Activated naive CD4-positive, alpha-beta T cell treated with anti-CD3 and anti-CD28 coated beads for 36 hours (primary cell): ENCODE measurements at regions of chr2 and their contacts with region 1.

Region 1: GRCh38 chr2:200373973-200374416 is 67.5 kb downstream of the SPATS2L start:
- DNase-seq: peak; percentile 66
- H3K4me3 Mint-ChIP-seq: peak overlapping the region; percentile 73
- H3K27ac Mint-ChIP-seq: peak overlapping the region; percentile 70
- H3K4me1 Mint-ChIP-seq: peaks cover 40% of the 10 kb centered on the region
- H3K27me3 Mint-ChIP-seq: no peaks in the 10 kb centered on the region

Region 2: GRCh38 chr2:200225951-200226350 is 148.0 kb before region 1 on chr2:
- CTCF ChIA-PET with region 1: no interaction called
- intact Hi-C with region 1: no loop called
- DNase-seq: no peak
- H3K4me3 Mint-ChIP-seq: no peak overlapping the region
- H3K27ac Mint-ChIP-seq: no peak overlapping the region
- H3K4me1 Mint-ChIP-seq: no peaks in the 10 kb centered on the region
- H3K27me3 Mint-ChIP-seq: peaks cover 8% of the 10 kb centered on the region

Region 3: DNA sequence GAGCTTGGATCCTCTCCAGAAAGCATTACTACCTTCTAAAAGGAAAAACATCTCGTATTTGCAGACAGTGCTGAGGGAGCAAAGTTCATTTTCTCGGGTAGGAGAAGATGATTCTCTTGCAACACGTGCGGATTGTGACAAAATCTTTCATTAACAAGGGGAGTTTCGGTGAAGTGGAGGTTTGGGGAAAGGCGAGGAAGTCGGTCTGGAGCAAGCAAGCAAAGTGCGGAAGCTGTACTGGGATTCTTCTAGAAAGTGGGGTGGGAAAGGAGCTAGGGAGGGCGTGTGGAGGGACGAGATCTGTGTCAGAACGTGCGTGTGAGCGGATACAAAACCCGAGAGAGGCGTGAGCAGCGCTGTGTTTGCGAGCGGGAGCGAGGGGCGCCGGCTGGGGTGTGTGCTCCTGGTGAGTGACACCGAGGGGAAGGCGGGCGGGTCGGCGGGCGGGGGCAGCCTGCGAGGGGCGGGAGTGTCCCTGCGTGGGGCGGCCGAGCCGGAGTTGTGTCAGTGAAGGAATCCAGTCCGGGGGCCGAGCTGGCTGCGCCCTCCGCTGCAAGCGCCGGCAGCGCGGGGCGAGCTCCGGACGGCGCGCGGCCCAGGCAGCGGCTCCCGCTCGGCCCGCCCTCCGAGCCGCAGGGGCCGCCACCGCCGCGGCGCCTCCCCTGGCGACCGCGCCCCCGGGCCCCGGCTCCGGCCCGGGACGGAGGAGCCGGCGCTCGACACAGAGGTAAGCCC is 67.6 kb before region 1 on chr2 and contains the start of gene SPATS2L:
- CTCF ChIA-PET with region 1: interaction called, 3 read pairs
- intact Hi-C with region 1: loop called (anchors 2 kb)
- DNase-seq: peak; percentile 64
- H3K4me3 Mint-ChIP-seq: peak within 1 kb of the TSS; percentile 85
- H3K27ac Mint-ChIP-seq: peak within 1 kb of the TSS; percentile 4
- H3K4me1 Mint-ChIP-seq: peaks cover 13% of the 10 kb centered on the region
- H3K27me3 Mint-ChIP-seq: peaks cover 15% of the 10 kb centered on the region
- total RNA-seq, gene SPATS2L: 8.9 to 10.9 TPM

Region 4: DNA sequence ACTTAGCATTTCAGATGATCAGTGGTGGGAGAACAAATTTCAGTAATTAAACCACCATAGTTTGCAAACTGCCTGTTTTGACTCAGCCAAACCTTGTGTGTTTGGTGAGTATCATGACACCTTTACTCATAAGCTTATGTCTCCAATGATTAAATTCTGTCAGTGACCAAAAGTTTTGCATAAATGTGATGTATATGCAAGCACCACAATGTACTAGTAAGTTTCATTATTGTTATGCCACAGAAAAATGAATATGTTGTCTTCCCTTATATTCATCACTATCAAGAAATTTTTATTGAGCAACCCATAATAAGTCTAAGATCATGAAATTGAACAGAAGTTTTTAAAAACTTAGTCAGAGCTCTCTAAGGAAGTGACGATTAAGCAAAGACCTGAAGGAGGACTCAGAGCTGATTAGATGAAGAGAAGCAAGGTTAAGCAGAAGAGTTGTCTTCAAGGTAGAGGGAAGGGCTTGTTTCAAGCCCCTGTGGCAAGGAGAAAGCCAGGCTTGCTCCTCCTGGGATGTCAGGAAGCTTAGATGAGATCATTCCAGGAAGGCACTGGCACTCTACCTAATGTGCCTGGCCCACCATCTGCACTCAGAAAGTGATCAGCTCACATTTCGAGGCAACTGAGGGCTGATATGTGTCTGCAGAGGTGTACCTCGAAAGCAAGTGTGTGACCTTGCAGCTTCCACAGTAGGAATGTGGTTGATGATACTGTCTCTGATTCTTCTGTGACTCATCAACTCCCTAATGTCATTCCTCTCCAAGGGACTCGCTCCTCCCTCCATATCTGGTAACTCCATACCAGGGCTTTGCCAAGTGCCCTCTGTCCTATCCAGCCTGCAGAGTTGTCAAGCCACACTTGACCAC is 81.2 kb after region 1 on chr2:
- CTCF ChIA-PET with region 1: interaction called, 3 read pairs
- intact Hi-C with region 1: loop called (anchors 1 kb)
- DNase-seq: no peak
- H3K4me3 Mint-ChIP-seq: no peak overlapping the region
- H3K27ac Mint-ChIP-seq: peak overlapping the region; percentile 73
- H3K4me1 Mint-ChIP-seq: peaks cover 30% of the 10 kb centered on the region
- H3K27me3 Mint-ChIP-seq: no peaks in the 10 kb centered on the region

Region 5: GRCh38 chr2:200725596-200725995 is 351.6 kb after region 1 on chr2:
- CTCF ChIA-PET with region 1: no interaction called
- intact Hi-C with region 1: no loop called
- DNase-seq: no peak
- H3K4me3 Mint-ChIP-seq: no peak overlapping the region
- H3K27ac Mint-ChIP-seq: no peak overlapping the region
- H3K4me1 Mint-ChIP-seq: no peaks in the 10 kb centered on the region
- H3K27me3 Mint-ChIP-seq: peaks cover 4% of the 10 kb centered on the region

Region 6: DNA sequence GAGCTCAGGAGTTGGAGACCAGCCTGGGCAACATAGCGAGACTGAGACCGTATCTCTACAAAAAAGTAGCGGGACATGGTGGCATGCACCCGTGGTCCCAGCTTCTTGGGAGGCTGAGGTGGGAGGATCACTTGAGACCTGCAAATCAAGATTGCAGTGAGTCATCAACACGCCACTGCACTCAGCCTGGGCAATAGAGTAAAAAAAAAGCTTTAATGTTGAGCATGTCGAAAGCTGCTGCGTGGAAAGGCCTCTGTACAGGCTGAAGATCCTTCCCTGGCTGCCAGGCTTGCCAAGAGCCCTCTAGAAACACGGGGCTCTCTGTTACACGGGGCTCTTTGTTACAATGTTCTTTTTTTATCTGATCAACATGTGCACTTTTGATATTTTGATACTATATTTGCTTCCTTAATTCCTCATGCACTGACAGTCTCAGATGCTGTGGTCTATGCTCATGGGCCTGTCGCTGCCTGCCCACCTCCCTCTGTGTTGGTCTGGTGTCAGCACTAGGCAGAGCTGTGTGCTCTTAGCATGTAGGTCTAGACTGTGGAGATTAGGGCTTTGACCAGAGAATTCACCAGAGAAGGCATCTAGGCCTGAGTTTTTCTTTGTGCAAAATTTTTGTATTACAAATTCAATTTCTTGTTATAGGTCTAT is 471.8 kb after region 1 on chr2:
- CTCF ChIA-PET with region 1: no interaction called
- intact Hi-C with region 1: no loop called
- DNase-seq: no peak
- H3K4me3 Mint-ChIP-seq: no peak overlapping the region
- H3K27ac Mint-ChIP-seq: no peak overlapping the region
- H3K4me1 Mint-ChIP-seq: no peaks in the 10 kb centered on the region
- H3K27me3 Mint-ChIP-seq: no peaks in the 10 kb centered on the region